ENCODE measurements at regions of chr10 and their contacts with region 1.

Region 1: DNA sequence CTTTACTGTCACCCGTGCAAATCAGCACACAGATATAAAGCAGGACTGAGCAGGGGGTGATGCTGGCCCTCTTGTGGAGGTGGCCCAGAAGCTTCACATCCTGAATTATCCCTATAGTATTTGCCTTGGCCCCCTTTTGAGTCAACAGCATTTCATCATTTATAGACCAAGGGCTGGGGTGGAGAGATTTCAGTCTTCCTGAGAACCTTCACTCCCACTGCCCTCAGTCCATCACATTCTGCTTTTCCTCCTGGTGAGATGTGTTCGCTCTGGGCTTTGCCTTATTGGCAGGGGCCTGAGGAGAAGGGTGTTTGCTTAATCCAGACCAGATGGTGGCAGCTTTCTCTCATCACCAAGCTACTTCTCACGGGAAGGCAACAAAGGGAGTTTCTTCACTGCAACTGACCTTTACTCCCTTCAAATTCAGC is 47.7 kb downstream of the NOC3L start:
- DNase-seq: peak; percentile 11
- H3K4me3 ChIP-seq: no peak overlapping the region
- H3K27ac ChIP-seq: no peak overlapping the region
- H3K4me1 ChIP-seq: peaks cover 10% of the 10 kb centered on the region
- H3K27me3 ChIP-seq: no peaks in the 10 kb centered on the region
- CTCF ChIP-seq: no peak

Region 2: DNA sequence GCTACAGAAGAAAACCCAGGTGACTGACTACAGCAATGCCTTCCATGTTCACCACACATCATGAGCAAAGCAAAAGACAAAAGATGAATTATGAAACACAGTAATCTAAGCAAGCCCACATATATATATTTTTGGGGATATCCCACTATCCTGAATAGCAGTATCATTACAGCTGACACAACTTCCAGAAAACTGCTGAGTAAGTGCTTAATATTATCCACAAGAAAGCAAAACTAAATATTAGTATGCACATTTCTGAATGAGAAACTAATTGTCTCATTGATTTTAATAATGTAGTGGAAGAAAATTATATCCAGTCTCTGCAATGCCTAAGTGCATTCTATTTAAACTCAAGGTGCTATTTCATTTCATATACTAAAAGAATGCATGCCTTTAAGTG is 435.8 kb before region 1 on chr10:
- CTCF ChIA-PET with region 1: no interaction called
- POLR2A ChIA-PET with region 1: no interaction called
- intact Hi-C with region 1: no loop called
- DNase-seq: no peak
- H3K4me3 ChIP-seq: no peak overlapping the region
- H3K27ac ChIP-seq: no peak overlapping the region
- H3K4me1 ChIP-seq: no peaks in the 10 kb centered on the region
- H3K27me3 ChIP-seq: no peaks in the 10 kb centered on the region
- CTCF ChIP-seq: no peak

Region 3: GRCh38 chr10:94076321-94076841 is 238.7 kb before region 1 on chr10:
- CTCF ChIA-PET with region 1: interaction called, 10 read pairs
- POLR2A ChIA-PET with region 1: no interaction called
- intact Hi-C with region 1: loop called (anchors 10 kb)
- DNase-seq: no peak
- H3K4me3 ChIP-seq: no peak overlapping the region
- H3K27ac ChIP-seq: no peak overlapping the region
- H3K4me1 ChIP-seq: no peaks in the 10 kb centered on the region
- H3K27me3 ChIP-seq: peaks cover 7% of the 10 kb centered on the region
- CTCF ChIP-seq: no peak

Region 4: GRCh38 chr10:94266091-94266490 is 48.9 kb before region 1 on chr10:
- CTCF ChIA-PET with region 1: no interaction called
- POLR2A ChIA-PET with region 1: no interaction called
- intact Hi-C with region 1: loop called (anchors 5 kb)
- DNase-seq: no peak
- H3K4me3 ChIP-seq: no peak overlapping the region
- H3K27ac ChIP-seq: no peak overlapping the region
- H3K4me1 ChIP-seq: no peaks in the 10 kb centered on the region
- H3K27me3 ChIP-seq: no peaks in the 10 kb centered on the region
- CTCF ChIP-seq: no peak